Mammary epithelial cell (primary cell): ENCODE measurements at regions of chr7 and their contacts with region 1.

Region 1: DNA sequence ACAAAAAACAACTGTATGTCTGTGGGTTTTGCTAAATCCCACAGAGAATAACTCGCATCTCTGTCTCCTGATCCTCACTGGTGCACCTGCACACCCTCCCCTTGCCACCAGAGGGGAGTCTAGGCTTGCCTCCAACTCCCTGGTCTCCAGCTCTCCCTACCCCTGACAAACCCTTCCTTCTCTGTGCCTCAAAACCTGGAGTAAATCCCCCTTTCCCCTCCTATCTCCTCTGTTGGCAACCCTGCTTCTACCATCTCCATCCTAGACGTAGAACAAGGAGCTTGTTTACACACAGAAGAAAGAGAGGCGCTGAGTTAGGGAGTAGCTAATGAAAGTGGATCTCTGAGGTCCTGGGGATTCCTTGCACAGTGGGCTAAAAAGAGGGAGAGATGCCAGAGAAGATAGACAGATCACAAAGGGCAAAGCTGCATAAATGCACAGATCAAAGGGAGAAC is 6.0 kb downstream of the MBLAC1 start:
- DNase-seq: peak; percentile 42
- H3K4me3 ChIP-seq: no peak overlapping the region
- H3K27ac ChIP-seq: no peak overlapping the region
- H3K4me1 ChIP-seq: peaks cover 4% of the 10 kb centered on the region
- H3K27me3 ChIP-seq: no peaks in the 10 kb centered on the region
- CTCF ChIP-seq: peak; percentile 91 to 97

Region 2: DNA sequence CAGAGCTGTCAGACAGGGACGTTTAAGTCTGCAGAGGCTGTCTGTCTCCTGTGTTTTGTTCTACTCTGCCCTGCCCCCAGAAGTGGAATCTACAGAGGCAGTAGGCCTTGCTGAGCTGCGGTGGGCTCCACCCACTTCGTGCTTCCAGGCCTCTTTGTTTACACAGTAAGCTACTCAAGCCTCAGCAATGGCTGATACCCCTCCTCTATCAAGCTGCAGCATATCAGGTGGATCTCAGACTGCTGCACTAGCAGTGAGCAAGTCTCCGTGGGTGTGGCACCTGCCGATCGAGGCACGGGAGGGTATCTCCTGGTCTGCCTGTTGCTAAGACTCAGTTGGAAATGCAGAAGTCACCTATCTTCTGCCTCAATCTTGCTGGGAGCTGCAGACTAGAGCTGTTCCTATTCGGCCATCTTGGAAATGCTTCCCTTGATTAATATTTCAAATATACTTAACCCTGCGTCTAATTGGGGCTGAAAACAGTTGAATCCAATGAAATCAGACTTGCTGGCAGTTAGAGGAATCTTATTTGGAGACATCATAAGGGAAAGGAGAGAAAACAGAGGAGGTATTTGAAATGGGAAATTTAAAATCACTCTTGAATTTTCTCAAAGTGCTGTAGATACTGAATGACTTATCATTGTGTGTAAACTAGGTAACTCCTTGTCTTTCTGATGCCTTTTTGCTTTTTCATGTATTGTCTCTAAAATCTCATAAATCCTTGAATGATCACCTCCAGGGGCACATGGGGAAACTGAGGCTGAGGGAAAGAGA is 439.1 kb before region 1 on chr7:
- CTCF ChIA-PET with region 1: no interaction called
- dilution Hi-C with region 1: no loop called
- in situ Hi-C with region 1: no loop called
- intact Hi-C with region 1: no loop called
- DNase-seq: no peak
- H3K4me3 ChIP-seq: no peak overlapping the region
- H3K27ac ChIP-seq: no peak overlapping the region
- H3K4me1 ChIP-seq: peaks cover 1% of the 10 kb centered on the region
- H3K27me3 ChIP-seq: no peaks in the 10 kb centered on the region
- CTCF ChIP-seq: no peak

Region 3: GRCh38 chr7:99918959-99919813 is 213.5 kb before region 1 on chr7 and contains the start of gene TRIM4:
- CTCF ChIA-PET with region 1: no interaction called
- dilution Hi-C with region 1: no loop called
- in situ Hi-C with region 1: no loop called
- intact Hi-C with region 1: loop called (anchors 5 kb)
- DNase-seq: peak; percentile 94
- H3K4me3 ChIP-seq: peak within 1 kb of the TSS; percentile 79 to 90 (median 86)
- H3K27ac ChIP-seq: peak within 1 kb of the TSS; percentile 73
- H3K4me1 ChIP-seq: peaks cover 26% of the 10 kb centered on the region
- H3K27me3 ChIP-seq: no peaks in the 10 kb centered on the region
- CTCF ChIP-seq: peak; percentile 5 to 49
- total RNA-seq, gene TRIM4: 23.2 to 24.5 TPM

Region 4: GRCh38 chr7:99997545-99998137 is 135.1 kb before region 1 on chr7:
- CTCF ChIA-PET with region 1: no interaction called
- dilution Hi-C with region 1: no loop called
- in situ Hi-C with region 1: loop called in 1 of 2 experiments (anchors 5 kb)
- intact Hi-C with region 1: loop called (anchors 1 kb)
- DNase-seq: no peak
- H3K4me3 ChIP-seq: peak overlapping the region in 1 of 3 experiments; percentile 21
- H3K27ac ChIP-seq: no peak overlapping the region
- H3K4me1 ChIP-seq: peaks cover 5% of the 10 kb centered on the region
- H3K27me3 ChIP-seq: no peaks in the 10 kb centered on the region
- CTCF ChIP-seq: no peak

Region 5: DNA sequence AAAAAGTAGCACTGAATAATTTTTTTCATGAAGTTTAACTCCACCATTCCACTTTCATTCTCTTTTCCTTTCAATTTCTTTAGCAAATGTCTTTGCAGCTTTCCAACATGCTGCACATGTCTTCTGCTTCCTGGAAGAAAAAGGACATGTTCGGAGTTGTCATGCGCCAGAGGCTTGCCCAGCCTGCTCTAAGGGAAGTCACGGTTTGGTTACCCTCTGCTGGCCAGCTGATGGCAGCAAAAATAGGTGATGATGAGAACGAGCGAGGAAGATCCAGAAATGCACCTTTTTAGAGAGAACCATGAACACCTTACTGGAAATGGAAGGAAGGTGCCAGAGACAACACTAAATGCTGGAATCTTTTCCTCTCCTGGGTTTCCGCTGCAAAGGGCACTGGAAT is 88.0 kb before region 1 on chr7:
- CTCF ChIA-PET with region 1: no interaction called
- dilution Hi-C with region 1: no loop called
- in situ Hi-C with region 1: no loop called
- intact Hi-C with region 1: no loop called
- DNase-seq: peak; percentile 33
- H3K4me3 ChIP-seq: no peak overlapping the region
- H3K27ac ChIP-seq: no peak overlapping the region
- H3K4me1 ChIP-seq: no peaks in the 10 kb centered on the region
- H3K27me3 ChIP-seq: no peaks in the 10 kb centered on the region
- CTCF ChIP-seq: peak in 1 of 2 donors; percentile 48

Region 6: DNA sequence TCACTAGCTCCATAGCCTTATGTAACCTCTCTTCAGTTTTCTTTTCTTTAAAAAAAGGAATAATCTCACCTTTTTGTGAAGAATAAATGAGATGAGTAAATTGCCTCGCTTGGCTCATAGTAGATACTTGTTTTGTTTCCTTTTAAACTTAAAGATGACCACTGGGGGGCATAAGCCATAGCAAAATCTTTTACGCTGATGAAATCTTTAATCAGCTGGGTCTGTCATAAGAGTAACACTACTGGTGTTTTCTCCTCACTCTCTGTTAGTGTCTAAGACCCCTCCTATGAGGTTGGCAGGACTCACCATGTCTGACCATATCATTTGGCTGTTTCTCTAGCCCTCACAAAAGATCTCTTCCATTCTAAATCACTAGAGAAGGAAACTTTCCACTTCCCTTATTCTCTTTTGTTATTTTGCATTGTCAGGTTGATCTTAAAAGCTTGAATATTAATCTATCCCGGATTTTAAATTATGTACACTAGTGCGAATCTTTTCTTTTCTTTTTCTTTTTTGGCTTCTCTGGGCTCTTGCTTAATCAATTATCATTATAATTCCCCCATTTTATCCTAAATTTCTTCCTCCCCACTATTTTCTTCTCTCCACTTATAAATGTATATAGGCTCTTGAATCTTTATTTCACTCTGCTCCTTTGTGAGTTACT is 57.5 kb after region 1 on chr7:
- CTCF ChIA-PET with region 1: no interaction called
- dilution Hi-C with region 1: no loop called
- in situ Hi-C with region 1: no loop called
- intact Hi-C with region 1: no loop called
- DNase-seq: peak; percentile 19
- H3K4me3 ChIP-seq: no peak overlapping the region
- H3K27ac ChIP-seq: no peak overlapping the region
- H3K4me1 ChIP-seq: no peaks in the 10 kb centered on the region
- H3K27me3 ChIP-seq: no peaks in the 10 kb centered on the region
- CTCF ChIP-seq: peak; percentile 6 to 11

Region 7: GRCh38 chr7:100204454-100204853 is 71.7 kb after region 1 on chr7:
- CTCF ChIA-PET with region 1: no interaction called
- dilution Hi-C with region 1: no loop called
- in situ Hi-C with region 1: no loop called
- intact Hi-C with region 1: no loop called
- DNase-seq: no peak
- H3K4me3 ChIP-seq: no peak overlapping the region
- H3K27ac ChIP-seq: no peak overlapping the region
- H3K4me1 ChIP-seq: no peaks in the 10 kb centered on the region
- H3K27me3 ChIP-seq: peaks cover 5% of the 10 kb centered on the region
- CTCF ChIP-seq: no peak

Region 8: DNA sequence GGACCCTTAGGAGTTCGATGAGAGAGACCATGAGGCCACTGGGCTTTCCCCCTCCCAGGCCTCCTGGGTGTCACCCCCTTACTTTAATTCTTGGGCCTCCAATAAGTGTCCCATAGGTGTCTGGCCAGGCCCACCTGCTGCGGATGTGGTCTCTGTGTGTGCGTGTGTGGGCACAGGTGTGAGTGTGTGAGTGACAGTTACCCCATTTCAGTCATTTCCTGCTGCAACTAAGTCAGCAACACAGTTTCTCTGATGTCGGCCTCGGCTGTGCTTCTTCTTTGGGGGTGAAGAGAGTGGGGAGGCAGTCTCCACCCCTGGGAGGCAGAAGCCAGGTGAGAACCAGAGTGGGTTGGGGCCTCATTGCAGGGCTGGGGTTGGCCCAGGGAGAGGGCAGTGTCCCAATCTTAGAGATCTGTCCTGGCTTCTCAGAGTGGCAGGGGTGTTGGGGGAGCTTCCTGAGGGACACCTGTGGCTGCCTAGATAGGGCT is 88.6 kb after region 1 on chr7:
- CTCF ChIA-PET with region 1: interaction called, 6 read pairs
- dilution Hi-C with region 1: no loop called
- in situ Hi-C with region 1: loop called (anchors 5 to 10 kb)
- intact Hi-C with region 1: loop called (anchors 1 kb)
- DNase-seq: no peak
- H3K4me3 ChIP-seq: no peak overlapping the region
- H3K27ac ChIP-seq: no peak overlapping the region
- H3K4me1 ChIP-seq: no peaks in the 10 kb centered on the region
- H3K27me3 ChIP-seq: no peaks in the 10 kb centered on the region
- CTCF ChIP-seq: no peak

Region 9: GRCh38 chr7:100342765-100343164 is 210.0 kb after region 1 on chr7:
- CTCF ChIA-PET with region 1: interaction called, 3 read pairs
- dilution Hi-C with region 1: no loop called
- in situ Hi-C with region 1: loop called in 1 of 2 experiments (anchors 10 kb)
- intact Hi-C with region 1: loop called (anchors 1 kb)
- DNase-seq: no peak
- H3K4me3 ChIP-seq: no peak overlapping the region
- H3K27ac ChIP-seq: no peak overlapping the region
- H3K4me1 ChIP-seq: peaks cover 20% of the 10 kb centered on the region
- H3K27me3 ChIP-seq: no peaks in the 10 kb centered on the region
- CTCF ChIP-seq: no peak

Region 10: DNA sequence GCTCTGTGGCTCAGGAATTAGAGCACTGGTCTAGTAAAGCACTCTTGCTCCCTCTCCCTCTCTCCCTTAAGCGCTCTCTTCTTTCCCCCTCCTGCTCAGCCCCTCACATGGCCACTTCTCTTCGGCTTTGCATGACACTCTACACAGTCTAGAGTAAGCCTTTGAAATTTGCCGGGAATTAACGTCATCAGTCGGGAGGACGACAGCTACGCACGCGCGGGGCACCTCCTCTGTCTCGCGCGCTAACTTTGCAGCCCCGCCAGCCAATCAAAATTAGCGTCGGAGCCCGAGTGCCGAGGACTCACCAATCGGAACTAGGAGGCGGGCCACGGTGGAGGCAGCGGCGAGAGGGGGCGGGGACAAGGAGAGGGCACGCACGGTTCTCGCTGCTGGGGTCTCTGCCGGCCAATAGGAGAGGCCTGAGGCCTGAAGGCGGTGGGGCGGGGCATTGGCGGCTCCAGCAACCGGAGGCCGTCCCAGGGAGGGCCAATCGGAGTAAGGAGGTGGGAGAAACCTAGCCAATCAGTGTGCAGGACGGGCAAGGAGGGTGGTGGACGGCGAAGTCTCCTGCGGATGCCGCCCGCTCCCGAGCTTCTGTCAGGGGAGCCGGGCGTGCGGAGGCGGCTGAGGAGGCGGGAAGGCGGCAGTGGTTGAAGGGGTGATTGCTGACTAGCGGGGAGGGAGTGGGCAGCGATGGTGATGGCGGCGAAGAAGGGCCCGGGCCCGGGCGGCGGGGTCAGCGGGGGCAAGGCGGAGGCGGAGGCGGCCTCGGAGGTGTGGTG is 406.1 kb after region 1 on chr7 and contains the start of gene AGFG2:
- CTCF ChIA-PET with region 1: interaction called, 12 read pairs
- dilution Hi-C with region 1: no loop called
- in situ Hi-C with region 1: no loop called
- intact Hi-C with region 1: no loop called
- DNase-seq: peak; percentile 100
- H3K4me3 ChIP-seq: peak within 1 kb of the TSS; percentile 60 to 72 (median 66)
- H3K27ac ChIP-seq: no peak within 1 kb of the TSS
- H3K4me1 ChIP-seq: peaks cover 7% of the 10 kb centered on the region
- H3K27me3 ChIP-seq: no peaks in the 10 kb centered on the region
- CTCF ChIP-seq: no peak
- total RNA-seq, gene AGFG2: 8.0 to 10.9 TPM